CD4-positive, alpha-beta memory T cell (primary cell): ENCODE measurements at regions of chr5 and their contacts with region 1.

Region 1: DNA sequence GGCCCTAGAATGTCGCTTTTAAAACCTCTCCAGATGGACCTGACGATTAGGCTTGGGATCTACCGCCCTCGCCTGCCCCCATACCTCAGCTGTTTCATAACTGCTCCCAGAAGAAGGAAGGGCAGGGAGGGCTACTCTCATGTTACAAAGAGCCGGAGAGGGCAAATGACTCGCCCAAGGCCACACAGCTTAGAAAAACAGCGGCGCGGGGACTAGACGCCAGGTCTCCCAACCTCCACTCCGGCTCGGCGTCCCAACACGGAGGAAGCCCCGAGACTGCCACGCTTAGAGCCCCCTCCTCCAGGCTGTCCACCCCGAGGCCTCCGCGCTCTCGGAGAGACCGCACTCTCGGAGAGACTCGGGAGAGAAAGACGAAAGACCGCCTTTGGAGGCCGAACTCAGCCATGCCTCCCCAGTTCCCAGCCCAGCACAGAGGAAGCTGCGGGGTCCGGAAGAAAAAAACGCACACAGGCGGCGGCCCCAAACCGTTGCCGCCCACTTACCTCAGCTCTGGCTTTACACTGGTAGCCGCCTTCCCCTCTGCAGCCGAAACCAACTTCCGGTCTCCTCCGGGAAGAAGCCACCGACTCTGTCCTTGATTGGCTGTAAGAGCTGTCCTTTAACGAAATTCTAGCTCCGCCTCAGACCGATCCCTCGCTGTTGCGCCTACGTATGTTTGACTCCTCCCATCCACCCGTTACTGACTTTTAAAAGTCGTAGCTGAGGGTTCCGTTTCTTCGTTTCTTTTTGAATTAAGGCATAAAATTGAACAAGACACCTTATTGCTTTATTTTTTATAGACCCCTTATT is at the start of gene MED7:
- DNase-seq: peak; percentile 94 to 98 (median 97)
- H3K4me3 ChIP-seq: peak within 1 kb of the TSS; percentile 92 to 94
- H3K4me3 Mint-ChIP-seq: peak within 1 kb of the TSS; percentile 94 to 100 (median 98)
- H3K27ac ChIP-seq: peak within 1 kb of the TSS; percentile 98
- H3K27ac Mint-ChIP-seq: peak within 1 kb of the TSS; percentile 94 to 100 (median 99)
- H3K4me1 ChIP-seq: peaks cover 28% of the 10 kb centered on the region
- H3K4me1 Mint-ChIP-seq: peaks cover 29 to 61% (median 39%) of the 10 kb centered on the region in 4 donors
- H3K27me3 ChIP-seq: no peaks in the 10 kb centered on the region
- H3K27me3 Mint-ChIP-seq: no peaks in the 10 kb centered on the region
- total RNA-seq, gene MED7: 18.9 to 20.3 TPM

Region 2: DNA sequence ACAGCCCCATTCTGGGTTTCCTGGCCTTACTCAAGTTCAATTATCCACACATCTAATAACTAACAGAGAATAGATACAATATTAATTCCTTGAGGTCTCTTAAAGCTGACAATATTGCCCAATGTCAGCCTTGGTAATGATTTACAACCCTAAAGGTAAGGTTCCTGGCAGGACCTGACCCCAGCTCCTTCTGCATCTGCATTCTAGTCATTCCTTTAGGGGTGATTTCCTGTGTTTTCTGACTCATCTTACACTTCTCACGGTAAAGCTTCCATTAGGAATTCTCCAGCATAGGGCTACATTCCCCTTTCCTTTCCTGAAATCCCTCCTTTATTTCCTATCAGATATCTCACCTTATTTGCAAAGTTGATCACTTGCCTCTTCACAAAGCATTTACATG is 92.9 kb before region 1 on chr5:
- CTCF ChIA-PET with region 1: no interaction called
- POLR2A ChIA-PET with region 1: interaction called, 12 read pairs
- intact Hi-C with region 1: no loop called
- DNase-seq: no peak
- H3K4me3 ChIP-seq: peak overlapping the region; percentile 18 to 22
- H3K4me3 Mint-ChIP-seq: peak overlapping the region; percentile 65 to 87 (median 82)
- H3K27ac ChIP-seq: no peak overlapping the region
- H3K27ac Mint-ChIP-seq: peak overlapping the region; percentile 68 to 95 (median 91)
- H3K4me1 ChIP-seq: peaks cover 17% of the 10 kb centered on the region
- H3K4me1 Mint-ChIP-seq: peaks cover 20 to 50% (median 33%) of the 10 kb centered on the region in 4 donors
- H3K27me3 ChIP-seq: no peaks in the 10 kb centered on the region
- H3K27me3 Mint-ChIP-seq: no peaks in the 10 kb centered on the region

Region 3: GRCh38 chr5:157088342-157088990 is 54.1 kb before region 1 on chr5:
- CTCF ChIA-PET with region 1: no interaction called
- POLR2A ChIA-PET with region 1: no interaction called
- intact Hi-C with region 1: no loop called
- DNase-seq: no peak
- H3K4me3 ChIP-seq: no peak overlapping the region
- H3K4me3 Mint-ChIP-seq: no peak overlapping the region
- H3K27ac ChIP-seq: no peak overlapping the region
- H3K27ac Mint-ChIP-seq: peak overlapping the region in 1 of 7 donors; percentile 46
- H3K4me1 ChIP-seq: no peaks in the 10 kb centered on the region
- H3K4me1 Mint-ChIP-seq: no peaks in the 10 kb centered on the region
- H3K27me3 ChIP-seq: no peaks in the 10 kb centered on the region
- H3K27me3 Mint-ChIP-seq: no peaks in the 10 kb centered on the region

Region 4: GRCh38 chr5:157121709-157122108 is 20.8 kb before region 1 on chr5:
- CTCF ChIA-PET with region 1: no interaction called
- POLR2A ChIA-PET with region 1: no interaction called
- intact Hi-C with region 1: no loop called
- DNase-seq: no peak
- H3K4me3 ChIP-seq: no peak overlapping the region
- H3K4me3 Mint-ChIP-seq: no peak overlapping the region
- H3K27ac ChIP-seq: no peak overlapping the region
- H3K27ac Mint-ChIP-seq: no peak overlapping the region
- H3K4me1 ChIP-seq: no peaks in the 10 kb centered on the region
- H3K4me1 Mint-ChIP-seq: peaks cover under 1 to 5% (median 1%) of the 10 kb centered on the region in 4 donors
- H3K27me3 ChIP-seq: no peaks in the 10 kb centered on the region
- H3K27me3 Mint-ChIP-seq: no peaks in the 10 kb centered on the region

Region 5: DNA sequence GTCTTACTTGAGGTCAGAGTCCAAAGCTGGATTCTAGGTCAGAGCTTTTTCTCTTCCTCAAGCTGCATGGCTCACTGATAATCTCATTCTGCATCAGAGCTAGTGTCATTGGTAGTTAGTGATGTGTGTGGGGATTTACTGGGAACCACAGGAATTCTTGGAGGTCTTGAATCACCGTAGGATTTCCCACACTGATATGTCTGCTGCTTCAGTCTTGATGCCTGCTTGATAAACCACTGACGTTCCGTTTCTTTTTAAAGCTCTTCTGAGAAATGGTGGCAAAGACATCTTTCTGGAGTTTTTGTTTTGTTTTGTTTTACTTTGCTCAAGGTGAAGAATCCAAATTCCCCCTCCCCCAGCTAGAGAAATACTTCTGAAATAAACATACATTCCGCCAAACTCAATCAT is 24.7 kb after region 1 on chr5:
- CTCF ChIA-PET with region 1: interaction called, 15 read pairs
- POLR2A ChIA-PET with region 1: interaction called, 16 read pairs
- intact Hi-C with region 1: no loop called
- DNase-seq: no peak
- H3K4me3 ChIP-seq: peak overlapping the region in 1 of 2 donors; percentile 12
- H3K4me3 Mint-ChIP-seq: peak overlapping the region; percentile 4 to 85 (median 67)
- H3K27ac ChIP-seq: peak overlapping the region; percentile 56
- H3K27ac Mint-ChIP-seq: peak overlapping the region; percentile 71 to 95 (median 80)
- H3K4me1 ChIP-seq: peaks cover 42% of the 10 kb centered on the region
- H3K4me1 Mint-ChIP-seq: peaks cover 42 to 85% (median 58%) of the 10 kb centered on the region in 4 donors
- H3K27me3 ChIP-seq: no peaks in the 10 kb centered on the region
- H3K27me3 Mint-ChIP-seq: no peaks in the 10 kb centered on the region

Region 6: DNA sequence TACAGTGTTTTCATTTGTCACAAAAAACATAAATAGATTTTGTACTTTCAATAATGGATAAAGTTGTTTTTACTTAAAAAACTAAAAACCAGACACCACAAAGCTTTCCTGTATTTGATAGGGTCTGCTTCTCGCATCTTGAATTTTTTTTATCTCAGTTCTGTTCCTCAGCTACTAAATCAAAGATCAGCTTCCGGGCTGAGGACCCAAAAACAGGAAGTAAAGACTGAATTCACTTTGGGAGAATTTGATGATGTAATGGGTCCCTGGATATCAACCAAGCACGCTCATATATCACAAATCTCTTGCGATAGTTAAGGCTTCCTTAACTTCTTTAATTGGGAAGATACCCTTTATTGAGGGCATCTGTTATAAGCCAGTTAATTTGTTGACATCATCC is 62.2 kb after region 1 on chr5:
- CTCF ChIA-PET with region 1: interaction called, 23 read pairs
- POLR2A ChIA-PET with region 1: interaction called, 13 read pairs
- intact Hi-C with region 1: no loop called
- DNase-seq: peak in 3 of 5 donors; percentile 44 to 74 (median 57)
- H3K4me3 ChIP-seq: no peak overlapping the region
- H3K4me3 Mint-ChIP-seq: peak overlapping the region; percentile 42 to 96 (median 74)
- H3K27ac ChIP-seq: peak overlapping the region; percentile 55
- H3K27ac Mint-ChIP-seq: peak overlapping the region; percentile 81 to 94 (median 87)
- H3K4me1 ChIP-seq: peaks cover 99% of the 10 kb centered on the region
- H3K4me1 Mint-ChIP-seq: peaks cover 60 to 96% (median 81%) of the 10 kb centered on the region in 4 donors
- H3K27me3 ChIP-seq: no peaks in the 10 kb centered on the region
- H3K27me3 Mint-ChIP-seq: no peaks in the 10 kb centered on the region

Region 7: DNA sequence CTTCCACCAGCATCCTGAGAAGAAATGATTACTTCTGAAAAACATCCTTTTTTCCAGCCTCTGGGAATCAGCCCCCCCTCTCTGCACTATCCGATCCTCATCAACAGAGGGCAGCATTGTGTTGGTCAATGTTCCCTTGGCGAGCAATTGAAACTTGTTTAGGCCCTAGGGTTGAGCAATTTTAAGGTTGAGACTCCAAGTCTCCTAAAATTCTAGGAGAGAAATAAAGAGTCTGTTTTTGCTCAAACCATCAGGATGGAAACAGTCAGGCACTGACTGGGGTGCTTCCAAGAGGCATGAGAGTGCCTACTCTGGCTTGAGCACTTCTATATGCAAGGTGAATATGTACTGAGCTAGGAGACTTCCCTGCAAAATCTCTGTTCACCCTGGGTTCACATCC is 111.0 kb after region 1 on chr5:
- CTCF ChIA-PET with region 1: interaction called, 99 read pairs
- POLR2A ChIA-PET with region 1: interaction called, 26 read pairs
- intact Hi-C with region 1: no loop called
- DNase-seq: no peak
- H3K4me3 ChIP-seq: no peak overlapping the region
- H3K4me3 Mint-ChIP-seq: peak overlapping the region in 7 of 8 donors; percentile 61 to 86 (median 79)
- H3K27ac ChIP-seq: peak overlapping the region; percentile 64
- H3K27ac Mint-ChIP-seq: peak overlapping the region; percentile 84 to 98 (median 94)
- H3K4me1 ChIP-seq: peaks cover 97% of the 10 kb centered on the region
- H3K4me1 Mint-ChIP-seq: peaks cover 78 to 96% (median 88%) of the 10 kb centered on the region in 4 donors
- H3K27me3 ChIP-seq: no peaks in the 10 kb centered on the region
- H3K27me3 Mint-ChIP-seq: no peaks in the 10 kb centered on the region

Region 8: GRCh38 chr5:157303667-157304327 is 161.3 kb after region 1 on chr5:
- CTCF ChIA-PET with region 1: interaction called, 30 read pairs
- POLR2A ChIA-PET with region 1: interaction called, 22 read pairs
- intact Hi-C with region 1: no loop called
- DNase-seq: peak; percentile 54 to 72 (median 66)
- H3K4me3 ChIP-seq: peak overlapping the region; percentile 27 to 33
- H3K4me3 Mint-ChIP-seq: peak overlapping the region; percentile 78 to 94 (median 86)
- H3K27ac ChIP-seq: peak overlapping the region; percentile 23
- H3K27ac Mint-ChIP-seq: peak overlapping the region; percentile 79 to 94 (median 93)
- H3K4me1 ChIP-seq: peaks cover 60% of the 10 kb centered on the region
- H3K4me1 Mint-ChIP-seq: peaks cover 48 to 69% (median 60%) of the 10 kb centered on the region in 4 donors
- H3K27me3 ChIP-seq: no peaks in the 10 kb centered on the region
- H3K27me3 Mint-ChIP-seq: no peaks in the 10 kb centered on the region

Region 9: GRCh38 chr5:157858527-157859226 is 716.2 kb after region 1 on chr5 and contains the start of gene CLINT1:
- CTCF ChIA-PET with region 1: no interaction called
- POLR2A ChIA-PET with region 1: interaction called, 5 read pairs
- intact Hi-C with region 1: loop called (anchors 5 kb)
- DNase-seq: peak; percentile 81 to 88 (median 85)
- H3K4me3 ChIP-seq: peak within 1 kb of the TSS; percentile 54 to 82
- H3K4me3 Mint-ChIP-seq: peak within 1 kb of the TSS; percentile 94 to 99 (median 95)
- H3K27ac ChIP-seq: peak within 1 kb of the TSS; percentile 85
- H3K27ac Mint-ChIP-seq: peak within 1 kb of the TSS; percentile 94 to 99 (median 97)
- H3K4me1 ChIP-seq: peaks cover 59% of the 10 kb centered on the region
- H3K4me1 Mint-ChIP-seq: peaks cover 49 to 74% (median 60%) of the 10 kb centered on the region in 4 donors
- H3K27me3 ChIP-seq: no peaks in the 10 kb centered on the region
- H3K27me3 Mint-ChIP-seq: no peaks in the 10 kb centered on the region
- total RNA-seq, gene CLINT1: 70.5 to 73.9 TPM